ENCODE measurements at regions of chr14 and their contacts with region 1.

Region 1: GRCh38 chr14:54108481-54109471 is 152.2 kb upstream of the BMP4 start:
- DNase-seq: peak; percentile 100
- ATAC-seq: peak; percentile 56
- H3K4me3 ChIP-seq: peak overlapping the region; percentile 6; the same call in 1 of the 2 replicates
- H3K27ac ChIP-seq: peak overlapping the region; percentile 88
- H3K4me1 ChIP-seq: peaks cover 75% of the 10 kb centered on the region
- H3K27me3 ChIP-seq: no peaks in the 10 kb centered on the region
- CTCF ChIP-seq: no peak

Region 2: GRCh38 chr14:54025661-54026060 is 83.1 kb before region 1 on chr14:
- CTCF ChIA-PET with region 1: interaction called, 5 read pairs
- POLR2A ChIA-PET with region 1: no interaction called
- intact Hi-C with region 1: loop called (anchors 1 kb)
- DNase-seq: peak; percentile 94
- ATAC-seq: peak; percentile 96
- H3K4me3 ChIP-seq: no peak overlapping the region
- H3K27ac ChIP-seq: no peak overlapping the region
- H3K4me1 ChIP-seq: peaks cover 13% of the 10 kb centered on the region
- H3K27me3 ChIP-seq: no peaks in the 10 kb centered on the region
- CTCF ChIP-seq: peak; percentile 97

Region 3: GRCh38 chr14:54123841-54124240 is 15.1 kb after region 1 on chr14:
- CTCF ChIA-PET with region 1: no interaction called
- POLR2A ChIA-PET with region 1: no interaction called
- intact Hi-C with region 1: no loop called
- DNase-seq: no peak
- ATAC-seq: no peak
- H3K4me3 ChIP-seq: no peak overlapping the region
- H3K27ac ChIP-seq: no peak overlapping the region
- H3K4me1 ChIP-seq: peaks cover 6% of the 10 kb centered on the region; the same call in 1 of the 2 replicates
- H3K27me3 ChIP-seq: no peaks in the 10 kb centered on the region
- CTCF ChIP-seq: no peak

Region 4: DNA sequence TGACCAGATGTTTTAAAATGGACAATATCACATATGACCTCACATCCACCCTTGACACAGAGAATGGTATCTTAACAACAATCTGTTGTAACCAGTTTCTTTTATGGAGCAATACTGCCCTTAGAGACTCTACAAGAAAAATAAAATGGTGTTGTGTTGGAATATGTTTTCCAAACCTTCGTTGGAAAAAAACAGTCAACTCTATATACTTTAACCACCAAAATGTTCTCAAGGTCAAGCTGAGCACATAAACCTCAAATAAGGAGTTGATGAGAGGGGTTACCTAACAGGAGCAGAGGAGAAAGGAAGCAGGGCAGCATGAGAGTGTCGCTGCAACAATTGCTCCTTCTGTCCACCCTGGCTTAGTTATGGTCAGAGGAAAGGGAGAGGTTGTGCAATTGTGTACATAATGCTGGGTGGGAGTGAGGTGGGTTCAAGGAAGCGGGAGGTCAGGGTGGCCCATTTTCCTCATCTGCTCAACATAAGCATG is 27.1 kb after region 1 on chr14:
- CTCF ChIA-PET with region 1: no interaction called
- POLR2A ChIA-PET with region 1: no interaction called
- intact Hi-C with region 1: loop called (anchors 2 kb)
- DNase-seq: no peak
- ATAC-seq: no peak
- H3K4me3 ChIP-seq: no peak overlapping the region
- H3K27ac ChIP-seq: no peak overlapping the region
- H3K4me1 ChIP-seq: peaks cover 23% of the 10 kb centered on the region
- H3K27me3 ChIP-seq: no peaks in the 10 kb centered on the region
- CTCF ChIP-seq: no peak

Region 5: GRCh38 chr14:54169254-54169924 is 60.6 kb after region 1 on chr14:
- CTCF ChIA-PET with region 1: interaction called, 5 read pairs
- POLR2A ChIA-PET with region 1: interaction called, 9 read pairs
- intact Hi-C with region 1: loop called (anchors 1 kb)
- DNase-seq: peak; percentile 100
- ATAC-seq: peak; percentile 85
- H3K4me3 ChIP-seq: peak overlapping the region; percentile 8; the same call in 1 of the 2 replicates
- H3K27ac ChIP-seq: peak overlapping the region; percentile 86
- H3K4me1 ChIP-seq: peaks cover 76% of the 10 kb centered on the region
- H3K27me3 ChIP-seq: no peaks in the 10 kb centered on the region
- CTCF ChIP-seq: peak; percentile 31; the same call in 1 of the 2 replicates

Region 6: DNA sequence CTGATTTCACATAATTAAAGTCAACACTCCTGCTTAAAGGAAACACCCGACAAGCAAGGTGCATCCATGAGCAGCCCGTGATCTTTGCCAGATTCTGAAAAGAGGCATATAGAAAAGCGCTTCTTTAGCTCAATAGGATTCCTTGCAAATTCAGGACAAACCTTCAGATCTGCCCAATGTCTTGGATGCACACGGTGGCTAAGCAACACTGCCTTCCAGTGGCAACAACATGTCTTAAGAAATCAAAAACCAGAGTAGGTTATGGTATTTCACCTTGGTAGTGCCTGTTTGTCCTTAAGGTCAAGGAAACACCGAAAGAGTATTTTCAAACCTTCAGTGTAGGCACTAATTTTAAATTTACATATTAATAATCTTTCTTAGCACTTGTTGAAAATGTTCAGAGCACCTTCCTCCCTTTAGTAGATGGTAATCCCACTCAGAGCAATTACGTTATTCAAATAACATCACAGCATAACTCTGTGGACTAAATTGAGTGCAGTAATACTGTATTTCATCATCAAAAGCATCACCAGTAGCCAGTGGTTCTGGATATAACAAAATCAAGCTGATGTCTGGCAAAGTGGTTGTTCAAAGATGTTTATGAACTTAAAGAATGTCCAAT is 230.0 kb after region 1 on chr14:
- CTCF ChIA-PET with region 1: interaction called, 6 read pairs
- POLR2A ChIA-PET with region 1: interaction called, 4 read pairs
- intact Hi-C with region 1: loop called (anchors 5 kb)
- DNase-seq: peak; percentile 93
- ATAC-seq: peak; percentile 79
- H3K4me3 ChIP-seq: no peak overlapping the region
- H3K27ac ChIP-seq: no peak overlapping the region
- H3K4me1 ChIP-seq: peaks cover 35% of the 10 kb centered on the region
- H3K27me3 ChIP-seq: no peaks in the 10 kb centered on the region
- CTCF ChIP-seq: peak; percentile 99

Region 7: DNA sequence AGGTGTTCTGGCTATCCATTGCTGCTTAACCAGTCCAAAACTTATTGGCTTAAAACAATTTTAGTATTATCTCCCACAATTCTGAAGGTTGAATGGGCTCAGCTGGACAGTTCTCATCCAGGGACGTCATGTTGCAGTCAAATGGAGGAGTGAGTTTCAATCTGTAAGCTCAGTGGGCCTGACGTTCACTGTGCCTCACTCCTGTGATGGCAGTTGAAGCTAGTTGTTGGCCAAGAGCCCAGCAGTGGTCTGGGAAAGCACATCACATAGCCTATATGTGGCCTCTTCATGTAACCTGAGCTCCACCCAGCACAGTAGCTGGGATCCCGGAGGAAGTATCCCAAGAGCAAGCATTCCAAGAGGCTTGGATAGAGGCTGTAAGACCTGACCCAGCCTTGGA is 247.4 kb after region 1 on chr14:
- CTCF ChIA-PET with region 1: no interaction called
- POLR2A ChIA-PET with region 1: interaction called, 9 read pairs
- intact Hi-C with region 1: loop called (anchors 5 kb)
- DNase-seq: peak; percentile 100
- ATAC-seq: peak; percentile 83
- H3K4me3 ChIP-seq: peak overlapping the region; percentile 27
- H3K27ac ChIP-seq: peak overlapping the region; percentile 88
- H3K4me1 ChIP-seq: peaks cover 53% of the 10 kb centered on the region
- H3K27me3 ChIP-seq: no peaks in the 10 kb centered on the region
- CTCF ChIP-seq: no peak